ENCODE measurements at regions of chr20 and their contacts with region 1.

Region 1: GRCh38 chr20:3218307-3218988 is 9.2 kb downstream of the ITPA start:
- DNase-seq: peak; percentile 79
- ATAC-seq: peak; percentile 92
- H3K4me3 Mint-ChIP-seq: no peak overlapping the region
- H3K27ac Mint-ChIP-seq: no peak overlapping the region
- H3K4me1 Mint-ChIP-seq: peaks cover 16% of the 10 kb centered on the region
- H3K27me3 Mint-ChIP-seq: no peaks in the 10 kb centered on the region

Region 2: DNA sequence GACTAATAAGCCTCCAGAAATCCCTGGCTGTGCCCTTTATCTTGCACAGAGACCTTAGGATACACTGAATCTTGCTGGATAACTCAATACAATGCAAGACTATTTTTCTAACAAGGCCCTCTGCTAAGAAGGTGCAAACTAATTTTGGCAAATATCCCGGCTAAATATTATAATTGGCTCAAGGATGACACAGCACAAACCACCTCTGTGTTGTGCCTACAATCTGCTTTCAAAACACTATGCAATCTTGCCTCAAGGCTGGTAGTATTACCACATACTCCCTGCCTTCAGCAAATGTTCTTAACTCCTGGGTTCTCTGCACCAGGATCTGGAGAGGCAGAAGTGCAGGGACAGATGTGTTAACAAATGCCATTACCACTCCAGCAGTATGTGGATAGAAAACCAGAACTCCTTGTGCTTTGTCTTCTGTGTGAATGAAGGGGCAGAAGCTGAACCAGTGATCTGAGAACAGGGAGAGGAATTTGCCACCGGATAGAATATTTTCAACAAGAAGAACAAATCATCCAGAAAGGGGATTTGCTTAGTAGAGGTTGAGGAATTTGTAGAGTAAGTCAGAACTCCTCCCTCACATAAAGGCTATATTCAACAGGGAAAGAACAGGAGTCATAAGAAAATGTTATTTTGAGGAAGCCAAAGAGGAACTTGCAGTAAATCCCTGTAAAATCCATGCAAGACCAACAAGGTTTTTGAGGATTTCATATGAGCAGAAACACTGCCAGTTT is 94.7 kb after region 1 on chr20:
- CTCF ChIA-PET with region 1: interaction called, 53 read pairs
- POLR2A ChIA-PET with region 1: no interaction called
- DNase-seq: no peak
- ATAC-seq: no peak
- H3K4me3 Mint-ChIP-seq: no peak overlapping the region
- H3K27ac Mint-ChIP-seq: no peak overlapping the region
- H3K4me1 Mint-ChIP-seq: no peaks in the 10 kb centered on the region
- H3K27me3 Mint-ChIP-seq: no peaks in the 10 kb centered on the region